ENCODE measurements at regions of chr7 and their contacts with region 1.

Region 1: GRCh38 chr7:38318803-38319416 is 45.5 kb upstream of the TARP start:
- DNase-seq: no peak
- ATAC-seq: peak; percentile 96
- H3K4me3 ChIP-seq: no peak overlapping the region
- H3K27ac ChIP-seq: no peak overlapping the region
- H3K4me1 ChIP-seq: no peaks in the 10 kb centered on the region
- H3K27me3 ChIP-seq: no peaks in the 10 kb centered on the region
- CTCF ChIP-seq: peak; percentile 74 to 88 (median 82)
- EP300 ChIP-seq: no peak
- POLR2A ChIP-seq: no peak
- RAD21 ChIP-seq: peak; percentile 93

Region 2: DNA sequence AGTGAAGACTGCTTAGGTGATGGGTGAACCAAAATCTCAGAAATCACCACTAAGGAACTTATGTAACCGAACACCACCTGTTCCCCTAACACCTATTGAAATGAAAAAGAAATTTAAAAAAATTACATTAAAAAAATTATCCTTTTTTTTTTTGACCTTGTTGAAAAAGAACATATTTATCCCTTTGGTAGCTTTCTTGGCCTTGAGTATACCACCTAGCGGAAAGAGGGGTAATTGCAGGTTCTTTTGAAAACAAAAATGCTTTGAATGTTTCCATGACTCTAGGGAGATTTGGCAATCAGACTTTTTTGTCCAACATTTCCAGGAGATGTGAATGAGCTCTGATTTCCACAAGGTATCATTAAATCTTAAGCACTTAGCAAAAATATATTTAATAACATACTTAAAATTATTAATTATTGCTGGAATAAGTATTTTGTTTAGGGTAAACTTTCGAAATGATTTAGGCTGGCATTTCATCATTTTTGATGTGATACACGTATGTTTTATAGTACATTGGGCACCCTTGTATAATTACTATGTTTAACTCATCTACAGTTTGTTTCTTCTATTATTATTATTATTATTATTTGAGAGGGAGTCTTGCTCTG is 823.2 kb before region 1 on chr7:
- CTCF ChIA-PET with region 1: no interaction called
- POLR2A ChIA-PET with region 1: no interaction called
- RAD21 ChIA-PET with region 1: no interaction called
- SMC1A ChIA-PET with region 1: no interaction called
- in situ Hi-C with region 1: no loop called
- intact Hi-C with region 1: no loop called
- DNase-seq: no peak
- ATAC-seq: peak; percentile 58; the same call in 1 of the 3 replicates
- H3K4me3 ChIP-seq: no peak overlapping the region
- H3K27ac ChIP-seq: no peak overlapping the region
- H3K4me1 ChIP-seq: peaks cover 8% of the 10 kb centered on the region; the same call in 1 of the 2 replicates
- H3K27me3 ChIP-seq: no peaks in the 10 kb centered on the region
- CTCF ChIP-seq: peak; percentile 55 to 72 (median 62)
- EP300 ChIP-seq: no peak
- POLR2A ChIP-seq: no peak
- RAD21 ChIP-seq: peak; percentile 57

Region 3: GRCh38 chr7:37901236-37901827 is 417.6 kb before region 1 on chr7:
- CTCF ChIA-PET with region 1: interaction called, 16 read pairs
- POLR2A ChIA-PET with region 1: no interaction called
- RAD21 ChIA-PET with region 1: interaction called, 3 read pairs
- SMC1A ChIA-PET with region 1: interaction called, 11 read pairs
- in situ Hi-C with region 1: no loop called
- intact Hi-C with region 1: loop called (anchors 5 kb)
- DNase-seq: no peak
- ATAC-seq: peak; percentile 78
- H3K4me3 ChIP-seq: no peak overlapping the region
- H3K27ac ChIP-seq: no peak overlapping the region
- H3K4me1 ChIP-seq: no peaks in the 10 kb centered on the region
- H3K27me3 ChIP-seq: peaks cover 0 to 2% of the 10 kb centered on the region in 2 experiments; a peak in 1 of 4 replicates
- CTCF ChIP-seq: peak; percentile 47 to 59 (median 50); a peak in 5 of 6 replicates
- EP300 ChIP-seq: no peak
- POLR2A ChIP-seq: no peak
- RAD21 ChIP-seq: peak; percentile 64

Region 4: DNA sequence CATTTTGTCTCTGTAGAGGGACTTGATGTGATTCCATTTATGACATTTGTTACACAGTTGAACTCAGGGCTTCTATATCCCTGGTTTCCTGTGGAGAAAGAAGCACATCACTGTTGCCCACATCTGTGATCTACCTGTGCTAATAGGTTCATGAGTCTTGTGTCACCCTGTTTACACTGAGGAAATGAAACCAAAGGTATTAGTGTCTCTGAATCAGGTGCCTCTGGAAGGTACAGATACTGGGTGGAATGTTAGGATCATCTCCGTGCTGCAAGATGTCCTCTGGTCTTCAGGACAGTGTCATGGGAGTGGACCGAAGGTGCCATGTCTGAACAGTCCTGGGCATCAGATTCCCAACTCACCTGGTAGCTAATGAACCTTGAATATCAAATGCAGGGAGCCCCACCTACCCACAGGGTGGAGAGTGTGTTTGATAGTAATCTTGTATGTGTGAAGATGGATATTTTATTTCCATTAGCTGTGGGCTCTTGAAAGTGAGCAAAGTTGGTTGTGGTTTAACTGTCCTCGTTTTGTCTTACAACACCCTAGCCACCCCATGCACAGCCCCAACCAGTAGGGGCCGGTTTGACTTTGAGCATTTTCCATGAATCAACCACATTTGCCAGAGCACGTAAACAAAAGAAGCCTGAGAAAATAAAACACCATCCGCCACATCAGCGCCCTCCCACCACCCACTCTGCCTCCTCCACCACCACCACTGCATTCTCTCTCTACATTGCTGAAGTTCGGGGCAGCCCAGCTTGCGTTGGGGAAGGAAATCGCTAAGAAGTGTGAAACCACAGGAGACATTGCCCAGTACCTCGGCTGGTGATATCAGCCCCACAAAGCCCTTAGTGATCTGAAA is 86.2 kb before region 1 on chr7:
- CTCF ChIA-PET with region 1: interaction called, 40 read pairs
- POLR2A ChIA-PET with region 1: no interaction called
- RAD21 ChIA-PET with region 1: interaction called, 32 read pairs
- SMC1A ChIA-PET with region 1: interaction called, 25 read pairs
- in situ Hi-C with region 1: no loop called
- intact Hi-C with region 1: no loop called
- DNase-seq: peak; percentile 82
- ATAC-seq: peak; percentile 96
- H3K4me3 ChIP-seq: no peak overlapping the region
- H3K27ac ChIP-seq: 0 out of 2 replicates have a peak overlapping the region, but pooled peaks have one; percentile 34
- H3K4me1 ChIP-seq: peaks cover 14% of the 10 kb centered on the region
- H3K27me3 ChIP-seq: no peaks in the 10 kb centered on the region
- CTCF ChIP-seq: peak in 1 of 3 experiments; percentile 17; a peak in 1 of 6 replicates
- EP300 ChIP-seq: peak in 1 of 2 experiments; percentile 82
- POLR2A ChIP-seq: no peak
- RAD21 ChIP-seq: no peak

Region 5: GRCh38 chr7:38296059-38296857 is 22.7 kb before region 1 on chr7:
- CTCF ChIA-PET with region 1: interaction called, 12 read pairs
- POLR2A ChIA-PET with region 1: interaction called, 3 read pairs
- RAD21 ChIA-PET with region 1: interaction called, 8 read pairs
- SMC1A ChIA-PET with region 1: interaction called, 8 read pairs
- in situ Hi-C with region 1: no loop called
- intact Hi-C with region 1: no loop called
- DNase-seq: peak; percentile 43
- ATAC-seq: peak; percentile 84
- H3K4me3 ChIP-seq: peak overlapping the region; percentile 1; the same call in 1 of the 2 replicates
- H3K27ac ChIP-seq: no peak overlapping the region; the same call in 1 of the 2 replicates
- H3K4me1 ChIP-seq: peaks cover 8% of the 10 kb centered on the region
- H3K27me3 ChIP-seq: no peaks in the 10 kb centered on the region
- CTCF ChIP-seq: no peak
- EP300 ChIP-seq: peak in 1 of 2 experiments; percentile 16; a peak in 1 of 4 replicates
- POLR2A ChIP-seq: no peak
- RAD21 ChIP-seq: no peak

Measured in GM12878 (cell line).